ENCODE measurements at regions of chr15 and their contacts with region 1.

Region 1: DNA sequence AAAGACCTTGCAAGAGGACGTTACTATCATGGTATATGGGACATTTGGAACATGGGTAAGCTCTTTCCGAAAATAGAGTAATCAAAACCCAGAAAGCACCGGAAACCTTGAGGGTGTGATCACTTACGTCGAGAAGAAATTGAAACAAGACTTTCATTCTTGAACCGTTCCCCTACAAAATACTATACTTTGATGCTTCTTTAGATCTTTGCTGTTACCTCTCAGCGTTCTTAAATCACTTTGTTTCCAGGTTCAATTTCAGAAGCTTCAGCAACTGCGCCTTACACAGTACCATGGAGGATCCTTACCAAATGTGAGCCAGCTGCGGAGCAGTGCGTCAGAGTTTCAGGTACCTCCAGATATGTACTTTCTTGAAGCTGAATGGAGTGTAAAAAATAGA is 10.1 kb downstream of the CRTC3 start:
- DNase-seq: peak in 30 of 35 experiments; percentile 4 to 74 (median 42)
- ATAC-seq: peak; percentile 76 to 95 (median 87)
- H3K4me3 ChIP-seq: peak overlapping the region; percentile 19 to 41
- H3K4me3 Mint-ChIP-seq: peak overlapping the region; percentile 78 to 90 (median 79)
- H3K27ac ChIP-seq: peak overlapping the region; percentile 81
- H3K27ac Mint-ChIP-seq: peak overlapping the region; percentile 95 to 99
- H3K4me1 ChIP-seq: peaks cover 30 to 35% of the 10 kb centered on the region in 2 experiments
- H3K4me1 Mint-ChIP-seq: peaks cover 82 to 92% (median 84%) of the 10 kb centered on the region in 3 donors
- H3K27me3 ChIP-seq: no peaks in the 10 kb centered on the region
- H3K27me3 Mint-ChIP-seq: no peaks in the 10 kb centered on the region

Region 2: DNA sequence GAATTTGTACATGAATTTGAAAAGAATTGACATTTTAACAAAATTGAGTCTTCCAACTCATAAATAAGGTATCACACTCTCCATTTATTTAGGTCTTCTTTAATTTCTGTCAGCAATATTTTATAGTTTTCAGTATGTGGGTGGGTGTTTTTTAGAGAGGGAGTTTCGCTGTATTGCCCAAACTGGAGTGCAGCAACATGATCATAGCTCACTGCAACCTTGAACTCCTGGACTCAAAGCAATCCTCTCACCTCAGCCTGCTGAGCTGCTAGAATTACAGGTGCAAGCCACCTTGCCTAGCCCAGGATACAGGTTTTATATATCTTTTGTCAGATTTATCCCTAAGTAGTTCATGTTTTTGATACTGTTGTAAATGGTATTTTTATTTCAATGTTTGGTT is 844.6 kb before region 1 on chr15:
- CTCF ChIA-PET with region 1: interaction called in 1 of 2 experiments, 11 read pairs
- POLR2A ChIA-PET with region 1: no interaction called
- DNase-seq: no peak
- ATAC-seq: no peak
- H3K4me3 ChIP-seq: no peak overlapping the region
- H3K4me3 Mint-ChIP-seq: no peak overlapping the region
- H3K27ac ChIP-seq: no peak overlapping the region
- H3K27ac Mint-ChIP-seq: no peak overlapping the region
- H3K4me1 ChIP-seq: peaks cover 0 to 7% of the 10 kb centered on the region in 2 experiments
- H3K4me1 Mint-ChIP-seq: peaks cover 6 to 8% (median 8%) of the 10 kb centered on the region in 3 donors
- H3K27me3 ChIP-seq: no peaks in the 10 kb centered on the region
- H3K27me3 Mint-ChIP-seq: peaks cover 4 to 8% of the 10 kb centered on the region in 2 donors

Region 3: DNA sequence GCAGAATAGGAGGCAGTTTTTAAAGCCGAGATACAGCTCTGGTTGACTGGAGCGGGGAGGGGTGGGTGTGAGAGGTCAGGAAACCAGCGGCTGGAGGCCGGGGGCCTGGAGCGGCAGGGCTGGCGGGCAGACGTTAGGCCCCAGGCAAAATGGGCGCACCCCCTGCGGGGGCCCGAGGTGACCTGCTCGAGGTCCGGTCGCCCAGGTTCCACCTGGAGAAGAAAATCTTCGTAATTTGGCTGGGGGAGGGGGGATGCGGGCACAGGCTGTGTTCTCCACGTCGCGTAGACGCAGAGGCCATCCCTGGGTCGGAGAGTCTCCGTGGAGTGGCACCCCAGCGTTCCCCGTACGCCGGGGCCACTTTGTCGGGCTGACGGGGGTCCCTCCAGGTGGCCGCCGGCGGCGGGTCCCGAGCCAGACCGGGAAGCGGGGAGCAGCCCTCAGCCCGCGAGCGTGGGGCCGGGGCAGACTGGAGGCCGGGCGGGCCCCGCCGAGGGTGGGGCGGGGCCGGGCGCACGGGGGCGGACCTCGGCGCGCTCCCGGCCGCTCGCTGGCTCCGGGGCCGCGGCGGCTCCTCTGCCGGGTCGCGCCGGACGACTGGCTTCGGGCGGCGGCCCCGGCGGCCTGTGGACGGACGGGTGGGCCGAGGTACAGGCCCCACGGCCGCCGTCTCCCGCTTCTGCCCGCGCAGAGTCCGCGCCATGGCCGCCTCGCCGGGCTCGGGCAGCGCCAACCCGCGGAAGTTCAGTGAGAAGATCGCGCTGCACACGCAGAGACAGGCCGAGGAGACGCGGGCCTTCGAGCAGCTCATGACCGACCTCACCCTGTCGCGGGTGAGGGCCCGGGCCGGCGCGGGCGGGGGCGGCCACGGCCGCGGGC is 10.2 kb before region 1 on chr15 and contains the start of gene CRTC3:
- CTCF ChIA-PET with region 1: interaction called, 3 to 24 read pairs
- POLR2A ChIA-PET with region 1: interaction called, 6 to 13 read pairs
- DNase-seq: peak; percentile 22 to 77 (median 53)
- ATAC-seq: peak; percentile 84 to 86 (median 85)
- H3K4me3 ChIP-seq: peak within 1 kb of the TSS; percentile 64 to 93
- H3K4me3 Mint-ChIP-seq: peak within 1 kb of the TSS; percentile 90 to 96 (median 95)
- H3K27ac ChIP-seq: peak within 1 kb of the TSS; percentile 59
- H3K27ac Mint-ChIP-seq: peak within 1 kb of the TSS; percentile 86 to 87
- H3K4me1 ChIP-seq: peaks cover 23 to 31% of the 10 kb centered on the region in 2 experiments
- H3K4me1 Mint-ChIP-seq: peaks cover 45 to 49% (median 46%) of the 10 kb centered on the region in 3 donors
- H3K27me3 ChIP-seq: no peaks in the 10 kb centered on the region
- H3K27me3 Mint-ChIP-seq: no peaks in the 10 kb centered on the region
- total RNA-seq, gene CRTC3: 88.3 to 119 (median 89.1) TPM

Region 4: GRCh38 chr15:90560229-90560776 is 20.5 kb after region 1 on chr15:
- CTCF ChIA-PET with region 1: interaction called, 3 to 15 read pairs
- POLR2A ChIA-PET with region 1: interaction called, 3 to 6 read pairs
- DNase-seq: no peak
- ATAC-seq: no peak
- H3K4me3 ChIP-seq: no peak overlapping the region
- H3K4me3 Mint-ChIP-seq: no peak overlapping the region
- H3K27ac ChIP-seq: peak overlapping the region; percentile 81
- H3K27ac Mint-ChIP-seq: peak overlapping the region; percentile 81 to 92
- H3K4me1 ChIP-seq: peaks cover 62 to 65% of the 10 kb centered on the region in 2 experiments
- H3K4me1 Mint-ChIP-seq: peaks cover 84 to 88% (median 86%) of the 10 kb centered on the region in 3 donors
- H3K27me3 ChIP-seq: no peaks in the 10 kb centered on the region
- H3K27me3 Mint-ChIP-seq: no peaks in the 10 kb centered on the region

Region 5: GRCh38 chr15:90583471-90584252 is 43.9 kb after region 1 on chr15:
- CTCF ChIA-PET with region 1: no interaction called
- POLR2A ChIA-PET with region 1: no interaction called
- DNase-seq: no peak
- ATAC-seq: peak in 2 of 4 experiments; percentile 19 to 68
- H3K4me3 ChIP-seq: no peak overlapping the region
- H3K4me3 Mint-ChIP-seq: peak overlapping the region; percentile 10 to 74 (median 13)
- H3K27ac ChIP-seq: no peak overlapping the region
- H3K27ac Mint-ChIP-seq: peak overlapping the region; percentile 87 to 97
- H3K4me1 ChIP-seq: peaks cover 32 to 49% of the 10 kb centered on the region in 2 experiments
- H3K4me1 Mint-ChIP-seq: peaks cover 76 to 81% (median 81%) of the 10 kb centered on the region in 3 donors
- H3K27me3 ChIP-seq: no peaks in the 10 kb centered on the region
- H3K27me3 Mint-ChIP-seq: no peaks in the 10 kb centered on the region